ENCODE measurements at regions of chr2 and their contacts with region 1.

Region 1: DNA sequence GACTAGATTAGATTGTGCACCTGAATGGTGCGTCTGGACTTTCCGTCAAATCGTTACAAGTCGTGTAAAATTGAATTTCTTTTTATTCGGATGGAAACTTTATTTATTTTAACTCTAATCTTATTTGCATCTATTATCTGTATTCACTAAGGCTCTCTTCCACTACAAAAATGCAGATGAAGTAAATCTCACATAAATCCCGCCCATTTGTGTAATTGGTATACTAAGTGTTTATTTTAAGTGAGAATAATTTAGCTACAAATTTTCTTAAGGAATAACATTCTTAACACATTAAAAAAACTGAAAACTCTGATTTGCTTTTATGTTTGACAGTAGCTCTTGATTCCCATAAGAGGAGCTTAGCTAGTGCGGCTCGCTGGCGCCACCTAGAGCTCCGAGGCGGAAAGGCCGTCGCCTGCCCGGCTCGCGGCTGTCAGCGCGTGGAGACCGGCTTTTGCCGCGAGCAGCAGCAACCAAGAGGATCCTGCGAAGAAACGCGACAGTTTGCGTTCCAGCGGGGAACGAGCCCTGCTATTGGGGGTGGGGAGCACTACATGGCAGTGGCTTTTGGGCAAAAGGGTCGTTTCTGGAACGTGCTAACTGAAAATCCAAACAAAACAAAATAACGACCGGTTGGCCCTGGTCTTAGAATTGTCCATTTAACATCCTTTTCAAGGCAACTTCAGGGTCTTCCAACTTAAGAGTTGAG is 6.7 kb downstream of the SP9 start:
- DNase-seq: peak; percentile 96

Region 2: GRCh38 chr2:172869861-172870260 is 1471.6 kb before region 1 on chr2:
- intact Hi-C with region 1: no loop called
- DNase-seq: no peak

Region 3: GRCh38 chr2:173402405-173402974 is 939.0 kb before region 1 on chr2:
- intact Hi-C with region 1: loop called (anchors 5 to 10 kb)
- DNase-seq: peak; percentile 89

Region 4: GRCh38 chr2:173590271-173590861 is 751.1 kb before region 1 on chr2:
- intact Hi-C with region 1: loop called in 1 of 2 experiments (anchors 10 kb)
- DNase-seq: peak; percentile 78

Region 5: DNA sequence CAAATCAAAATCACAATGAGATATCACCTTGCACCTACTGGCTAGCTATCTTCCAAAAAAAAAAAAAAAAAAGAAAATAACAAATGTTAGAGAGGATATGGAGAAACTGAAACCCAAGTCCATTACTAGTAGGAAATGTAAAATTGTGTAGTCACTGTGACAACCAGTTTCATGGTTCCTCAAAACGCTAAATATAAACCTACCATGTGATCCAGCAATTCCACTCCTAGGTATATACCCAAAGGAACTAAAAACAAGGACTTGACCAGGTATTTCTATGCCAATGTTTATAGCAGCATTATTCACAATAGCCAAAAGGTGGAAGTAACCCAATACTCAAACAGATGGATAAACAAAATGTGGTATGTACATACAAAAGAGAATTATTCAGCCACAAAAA is 42.4 kb after region 1 on chr2:
- intact Hi-C with region 1: loop called in 1 of 2 experiments (anchors 1 kb)
- DNase-seq: no peak